ENCODE measurements at regions of chr9 and their contacts with region 1.

Region 1: GRCh38 chr9:12719431-12719830 is 26.2 kb downstream of the TYRP1 start:
- DNase-seq: no peak
- ATAC-seq: peak; percentile 74
- H3K4me3 ChIP-seq: no peak overlapping the region
- H3K27ac ChIP-seq: no peak overlapping the region
- H3K4me1 ChIP-seq: no peaks in the 10 kb centered on the region
- H3K27me3 ChIP-seq: no peaks in the 10 kb centered on the region

Region 2: DNA sequence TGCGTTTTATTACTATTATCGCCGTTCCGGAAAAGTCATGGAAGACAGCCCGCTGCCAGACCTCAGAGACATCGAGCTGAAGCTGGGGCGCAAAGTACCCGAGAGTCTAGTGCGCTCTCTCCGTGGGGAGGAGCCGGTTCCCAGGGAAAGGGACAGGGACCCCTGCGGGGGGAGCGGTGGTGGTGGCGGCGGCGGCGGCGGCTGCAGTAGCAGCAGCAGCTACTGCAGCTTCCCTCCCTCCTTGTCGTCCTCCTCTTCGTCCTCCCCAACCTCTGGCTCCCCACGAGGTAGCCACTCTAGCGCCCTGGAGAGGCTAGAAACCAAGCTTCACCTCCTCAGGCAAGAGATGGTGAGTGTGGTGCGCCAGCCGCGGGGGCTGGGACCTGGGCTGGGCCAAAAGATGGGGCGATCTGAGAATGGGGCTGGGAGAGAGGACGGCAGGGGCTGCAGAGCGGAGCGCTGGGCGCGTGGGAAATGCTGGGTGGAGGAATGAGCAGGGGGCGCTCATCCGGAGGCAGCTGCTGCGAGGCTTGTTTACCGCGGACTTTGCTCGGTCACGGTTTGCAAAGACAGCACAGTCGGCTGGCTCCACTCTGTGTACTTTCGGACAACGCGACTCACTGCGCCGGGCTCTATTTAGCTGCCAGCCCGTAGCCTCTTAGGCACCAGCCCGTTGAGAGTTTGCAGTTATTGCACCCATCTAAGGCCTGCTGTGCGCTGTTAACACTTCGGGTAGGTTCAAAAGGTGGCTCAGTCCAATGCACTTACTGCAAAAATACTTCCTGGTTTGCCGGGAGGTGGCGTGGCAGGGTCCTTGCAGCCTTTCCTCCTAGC is 56.5 kb after region 1 on chr9:
- intact Hi-C with region 1: loop called (anchors 5 kb)
- DNase-seq: peak; percentile 67 to 85
- ATAC-seq: peak; percentile 93
- H3K4me3 ChIP-seq: peak overlapping the region; percentile 69 to 89
- H3K27ac ChIP-seq: peak overlapping the region in 1 of 2 donors; percentile 72
- H3K4me1 ChIP-seq: peaks cover 2 to 8% of the 10 kb centered on the region in 2 donors
- H3K27me3 ChIP-seq: no peaks in the 10 kb centered on the region

Region 3: GRCh38 chr9:12813960-12814876 is 94.8 kb after region 1 on chr9:
- intact Hi-C with region 1: loop called in 1 of 2 experiments (anchors 10 kb)
- DNase-seq: peak; percentile 50 to 57
- ATAC-seq: peak; percentile 88
- H3K4me3 ChIP-seq: no peak overlapping the region
- H3K27ac ChIP-seq: peak overlapping the region in 1 of 2 donors; percentile 28
- H3K4me1 ChIP-seq: peaks cover 5 to 13% of the 10 kb centered on the region in 2 donors
- H3K27me3 ChIP-seq: no peaks in the 10 kb centered on the region

Region 4: GRCh38 chr9:13088720-13089427 is 369.4 kb after region 1 on chr9:
- intact Hi-C with region 1: loop called (anchors 5 to 10 kb)
- DNase-seq: peak in 1 of 2 donors; percentile 44
- ATAC-seq: peak; percentile 72
- H3K4me3 ChIP-seq: no peak overlapping the region
- H3K27ac ChIP-seq: no peak overlapping the region
- H3K4me1 ChIP-seq: peaks cover 0 to 4% of the 10 kb centered on the region in 2 donors
- H3K27me3 ChIP-seq: no peaks in the 10 kb centered on the region